ENCODE measurements at regions of chr6 and their contacts with region 1.

Region 1: DNA sequence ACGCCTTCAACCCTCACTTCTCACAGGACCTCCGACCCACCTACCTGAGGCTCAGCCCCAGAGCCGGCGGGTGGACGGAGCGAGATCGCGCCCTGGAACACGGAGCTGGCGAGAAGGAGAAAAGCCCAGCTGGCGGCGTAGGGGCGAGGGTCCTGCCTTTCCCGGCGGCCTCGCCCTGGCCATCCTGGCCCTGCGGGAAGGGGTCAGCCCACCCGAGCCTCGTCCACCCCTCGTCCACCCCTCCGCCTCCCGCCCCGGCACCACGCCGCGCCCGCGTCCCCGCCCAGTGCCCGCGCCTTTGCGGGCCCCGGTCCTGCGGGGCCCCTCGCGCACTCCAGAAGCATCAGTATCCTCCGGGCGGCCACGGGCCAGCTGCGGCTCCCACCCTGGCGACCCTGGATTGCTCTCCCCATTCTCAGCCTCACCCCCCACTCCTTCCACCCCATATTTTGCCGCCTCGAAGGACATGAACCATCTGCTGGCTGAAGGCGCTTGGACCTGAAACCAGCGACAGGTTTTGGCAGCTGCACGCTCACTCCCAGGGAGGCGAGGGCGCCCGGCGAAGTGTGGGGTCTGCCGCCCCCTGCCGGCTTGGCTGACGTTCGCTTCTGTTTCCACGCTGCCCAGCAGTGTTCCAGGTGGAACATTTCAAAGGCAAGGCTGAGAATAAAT is 65.1 kb downstream of the PLG start:
- DNase-seq: peak; percentile 56
- H3K4me3 Mint-ChIP-seq: peak overlapping the region; percentile 61
- H3K27ac Mint-ChIP-seq: no peak overlapping the region
- H3K4me1 Mint-ChIP-seq: peaks cover 5% of the 10 kb centered on the region
- H3K27me3 Mint-ChIP-seq: peaks cover 43% of the 10 kb centered on the region

Region 2: DNA sequence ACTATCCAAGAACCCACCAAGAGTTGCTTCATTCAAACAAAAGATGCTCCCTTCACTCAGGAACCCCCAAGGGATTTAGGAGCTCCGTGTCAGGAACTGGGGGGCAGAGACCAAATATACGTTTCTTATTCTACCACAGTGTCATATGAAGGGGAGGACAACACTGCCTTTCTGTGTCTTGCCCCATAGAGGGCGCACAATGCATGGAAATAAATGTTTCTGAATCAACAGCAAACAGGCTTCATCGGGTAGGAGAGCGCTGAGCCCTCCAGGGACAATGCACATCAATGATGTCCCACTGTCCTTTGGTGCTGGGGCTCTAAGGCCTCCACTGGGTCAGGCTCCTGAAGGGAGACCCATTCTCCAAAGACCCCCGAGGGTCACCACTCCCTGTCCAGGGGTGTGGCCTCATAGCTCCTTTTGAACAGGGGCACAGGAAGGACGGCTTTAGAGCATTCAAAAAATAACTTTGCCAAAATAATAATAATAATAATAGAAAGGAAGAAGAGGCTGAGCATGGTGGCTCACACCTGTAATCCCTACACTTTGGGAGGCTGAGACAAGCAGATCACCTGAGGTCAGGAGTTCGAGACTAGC is 34.0 kb before region 1 on chr6:
- CTCF ChIA-PET with region 1: interaction called, 9 read pairs
- intact Hi-C with region 1: loop called (anchors 1 kb)
- DNase-seq: peak; percentile 56
- H3K4me3 Mint-ChIP-seq: no peak overlapping the region
- H3K27ac Mint-ChIP-seq: no peak overlapping the region
- H3K4me1 Mint-ChIP-seq: no peaks in the 10 kb centered on the region
- H3K27me3 Mint-ChIP-seq: peaks cover 15% of the 10 kb centered on the region